Common myeloid progenitor, CD34-positive (primary cell): ENCODE measurements at regions of chr13 and their contacts with region 1.

Region 1: DNA sequence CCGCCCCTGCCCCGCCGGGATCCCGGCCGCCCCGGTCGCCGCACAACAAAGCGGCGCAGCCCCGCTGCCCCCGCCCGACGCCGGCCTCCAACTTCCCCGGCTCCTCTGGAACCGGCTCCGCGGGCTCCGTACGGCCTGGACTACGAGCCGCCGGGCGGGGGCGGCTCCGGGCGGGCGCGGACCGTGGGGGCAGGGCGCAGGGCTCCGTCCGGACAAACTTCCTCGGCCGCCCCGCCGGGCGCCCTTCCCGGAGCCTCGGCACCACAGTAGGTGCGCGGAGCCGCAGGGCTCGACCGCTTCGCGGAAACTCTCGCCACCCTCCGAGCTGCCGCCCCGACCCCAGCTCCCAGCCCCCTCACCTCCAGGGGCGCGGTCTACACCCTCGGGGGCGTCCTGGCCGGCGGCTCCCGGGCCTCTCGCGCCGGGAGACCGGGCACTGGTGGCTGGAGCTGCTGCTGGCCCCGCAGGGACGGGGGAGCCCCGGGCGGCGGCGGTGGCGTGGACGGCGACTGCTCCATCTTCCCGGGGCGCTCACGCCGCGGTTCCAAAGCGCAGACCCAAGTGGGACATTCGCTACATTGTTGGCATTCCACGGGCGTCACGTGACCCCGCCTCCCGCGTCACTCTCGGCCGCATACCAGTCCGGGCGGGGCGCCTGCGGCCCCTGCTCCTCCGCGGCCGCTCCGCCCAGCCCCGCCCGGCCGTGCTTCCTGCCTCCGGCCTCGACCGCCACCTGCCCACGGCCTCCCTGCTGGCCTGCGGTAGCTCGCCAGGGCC is at the start of gene LATS2:
- DNase-seq: peak; percentile 81 to 89 (median 83)
- H3K4me3 ChIP-seq: peak within 1 kb of the TSS; percentile 72 to 92 (median 86)
- H3K27ac ChIP-seq: peak within 1 kb of the TSS; percentile 81 to 86
- H3K4me1 ChIP-seq: peaks cover 12 to 54% (median 36%) of the 10 kb centered on the region in 4 experiments
- H3K27me3 ChIP-seq: no peaks in the 10 kb centered on the region

Region 2: GRCh38 chr13:21043898-21044297 is 17.3 kb before region 1 on chr13:
- CTCF ChIA-PET with region 1: interaction called, 11 read pairs
- POLR2A ChIA-PET with region 1: interaction called, 4 read pairs
- DNase-seq: no peak
- H3K4me3 ChIP-seq: peak overlapping the region in 1 of 7 experiments; percentile 6
- H3K27ac ChIP-seq: peak overlapping the region in 1 of 2 experiments; percentile 15
- H3K4me1 ChIP-seq: peaks cover 20 to 82% (median 61%) of the 10 kb centered on the region in 4 experiments
- H3K27me3 ChIP-seq: no peaks in the 10 kb centered on the region

Region 3: DNA sequence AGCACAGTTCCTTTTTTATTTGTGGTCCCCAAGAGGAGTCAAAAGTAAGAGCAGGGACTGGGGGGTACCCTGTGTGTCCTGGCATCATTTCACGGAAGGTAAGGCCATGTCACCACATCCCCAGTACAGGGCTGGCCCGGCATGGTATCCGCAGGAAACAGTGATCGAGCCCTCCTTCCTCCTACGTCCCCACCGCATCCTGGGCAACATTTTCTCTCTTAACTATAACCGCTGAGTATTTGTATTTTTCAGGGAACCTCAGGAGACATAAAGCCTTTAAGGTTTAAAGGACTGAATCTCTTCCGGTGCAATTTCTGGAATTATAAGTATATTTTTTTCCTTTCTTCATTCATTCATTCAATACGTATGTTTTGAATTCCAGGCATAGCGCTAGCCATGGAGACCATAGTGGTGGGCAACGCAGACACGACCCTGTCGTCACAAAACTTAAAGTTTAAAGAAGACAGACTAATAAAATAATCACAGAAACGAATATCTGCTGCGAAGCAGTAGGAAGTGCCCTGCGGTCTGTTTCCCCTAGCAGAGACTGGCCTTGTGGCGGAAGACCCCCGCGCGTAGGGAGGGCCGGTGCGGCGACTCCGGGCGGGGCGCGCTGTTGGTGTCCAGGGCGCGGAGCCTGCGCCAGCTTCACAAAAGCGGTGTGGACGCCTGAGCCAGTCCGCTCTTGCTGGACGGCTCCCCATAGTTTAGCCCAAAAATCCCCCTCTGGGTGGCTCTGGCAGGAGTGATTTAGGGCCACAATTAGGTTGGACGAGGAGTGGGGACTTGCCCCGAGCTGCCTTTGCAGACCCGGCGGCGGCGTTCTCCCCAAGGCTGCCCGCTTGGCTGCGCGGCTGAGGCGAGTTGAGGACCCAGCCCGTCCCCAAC is 14.1 kb after region 1 on chr13:
- CTCF ChIA-PET with region 1: interaction called, 10 read pairs
- POLR2A ChIA-PET with region 1: interaction called, 22 read pairs
- DNase-seq: peak; percentile 95 to 100 (median 99)
- H3K4me3 ChIP-seq: peak overlapping the region; percentile 50 to 84 (median 70)
- H3K27ac ChIP-seq: peak overlapping the region; percentile 94 to 97
- H3K4me1 ChIP-seq: peaks cover 8 to 66% (median 51%) of the 10 kb centered on the region in 4 experiments
- H3K27me3 ChIP-seq: no peaks in the 10 kb centered on the region